Calu3 (cell line): ENCODE measurements at regions of chr3 and their contacts with region 1.

Region 1: GRCh38 chr3:51995346-51996163 is at the start of gene RPL29:
- DNase-seq: peak; percentile 91
- H3K4me3 Mint-ChIP-seq: peak within 1 kb of the TSS; percentile 89
- H3K27ac Mint-ChIP-seq: peak within 1 kb of the TSS; percentile 99
- H3K4me1 Mint-ChIP-seq: peaks cover 26% of the 10 kb centered on the region
- H3K27me3 Mint-ChIP-seq: no peaks in the 10 kb centered on the region
- CTCF ChIP-seq: no peak
- total RNA-seq, gene RPL29: 747 and 782 TPM in 2 replicates

Region 2: DNA sequence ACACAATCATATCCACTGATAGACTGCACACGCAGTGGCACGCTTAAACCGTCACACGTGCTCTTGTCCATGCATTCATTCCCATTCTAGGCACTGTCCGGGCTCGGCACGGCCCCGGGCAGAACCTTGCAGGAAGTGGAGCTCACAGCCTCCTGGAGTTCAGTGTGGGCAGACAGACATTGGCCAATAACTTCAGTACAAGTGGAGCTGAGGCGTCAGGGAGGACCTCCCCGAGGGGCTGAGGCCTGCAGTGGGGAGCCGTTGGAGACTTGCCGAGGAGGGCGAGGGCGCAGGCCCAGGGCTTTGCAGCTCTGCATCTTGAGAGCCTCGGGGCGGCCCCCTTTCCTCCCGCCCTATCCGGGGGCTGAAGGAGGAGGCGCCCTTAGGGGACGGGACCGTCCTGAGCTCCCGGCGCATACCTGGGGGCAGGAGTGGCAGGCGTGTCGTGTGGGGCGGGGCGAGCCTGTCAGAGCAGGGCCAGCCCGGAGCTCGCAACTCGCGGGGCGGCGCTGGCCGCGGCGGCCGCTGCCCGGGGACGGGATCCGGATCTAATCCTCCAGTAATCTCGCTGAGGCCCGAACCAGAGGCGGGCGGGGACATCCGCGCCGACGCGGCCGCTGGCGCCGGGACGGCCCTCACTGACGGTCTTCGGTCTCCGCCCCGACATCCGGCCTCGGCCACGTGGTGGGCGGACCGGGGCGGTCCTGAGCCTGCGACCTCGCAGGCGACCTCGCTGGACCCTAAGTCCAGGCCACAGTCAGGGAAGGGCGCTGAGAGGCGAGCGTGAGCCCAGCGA is 12.6 kb before region 1 on chr3 and contains the start of gene ACY1:
- CTCF ChIA-PET with region 1: interaction called, 11 read pairs
- intact Hi-C with region 1: no loop called
- DNase-seq: peak; percentile 89
- H3K4me3 Mint-ChIP-seq: peak within 1 kb of the TSS; percentile 98
- H3K27ac Mint-ChIP-seq: peak within 1 kb of the TSS; percentile 84
- H3K4me1 Mint-ChIP-seq: no peaks in the 10 kb centered on the region
- H3K27me3 Mint-ChIP-seq: no peaks in the 10 kb centered on the region
- CTCF ChIP-seq: no peak
- total RNA-seq, gene ACY1: 71.6 and 74.9 TPM in 2 replicates

Region 3: GRCh38 chr3:52108302-52109232 is 113.0 kb after region 1 on chr3:
- CTCF ChIA-PET with region 1: no interaction called
- intact Hi-C with region 1: no loop called
- DNase-seq: no peak
- H3K4me3 Mint-ChIP-seq: no peak overlapping the region
- H3K27ac Mint-ChIP-seq: no peak overlapping the region
- H3K4me1 Mint-ChIP-seq: no peaks in the 10 kb centered on the region
- H3K27me3 Mint-ChIP-seq: no peaks in the 10 kb centered on the region
- CTCF ChIP-seq: no peak